Mammary epithelial cell (primary cell): ENCODE measurements at regions of chr1 and their contacts with region 1.

Region 1: GRCh38 chr1:14549897-14550620 is 48.4 kb upstream of the KAZN start:
- DNase-seq: no peak
- H3K4me3 ChIP-seq: no peak overlapping the region
- H3K27ac ChIP-seq: no peak overlapping the region
- H3K4me1 ChIP-seq: no peaks in the 10 kb centered on the region
- H3K27me3 ChIP-seq: no peaks in the 10 kb centered on the region
- CTCF ChIP-seq: no peak

Region 2: DNA sequence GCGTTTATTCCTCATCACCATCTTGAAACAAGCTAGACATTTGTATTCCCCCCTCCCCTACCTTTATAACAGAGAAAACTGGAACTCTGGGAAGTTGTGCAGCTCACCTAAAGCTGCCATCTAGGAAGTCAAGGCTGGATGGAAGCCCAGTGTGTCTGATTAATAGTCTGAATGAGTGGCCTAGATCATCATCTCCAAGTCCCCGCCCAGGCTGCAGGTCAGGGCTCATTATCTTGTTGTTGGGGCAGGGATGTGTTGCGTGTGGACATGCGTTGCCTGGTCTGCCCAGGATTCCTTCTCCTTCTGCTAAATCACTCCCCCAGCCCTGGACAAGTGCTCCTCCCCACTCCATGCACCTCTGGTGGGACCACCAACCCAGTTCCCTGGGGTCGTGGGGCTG is 33.7 kb after region 1 on chr1:
- CTCF ChIA-PET with region 1: no interaction called
- dilution Hi-C with region 1: loop called (anchors 5 kb)
- in situ Hi-C with region 1: no loop called
- intact Hi-C with region 1: no loop called
- DNase-seq: no peak
- H3K4me3 ChIP-seq: no peak overlapping the region
- H3K27ac ChIP-seq: no peak overlapping the region
- H3K4me1 ChIP-seq: no peaks in the 10 kb centered on the region
- H3K27me3 ChIP-seq: no peaks in the 10 kb centered on the region
- CTCF ChIP-seq: no peak